Posterior vena cava (tissue), 2 donors: ENCODE measurements at regions of chr9 and their contacts with region 1.

Region 1: GRCh38 chr9:106059886-106060285 is 365.5 kb downstream of the TMEM38B start:
- DNase-seq: no peak

Region 2: GRCh38 chr9:106111045-106111717 is 51.3 kb after region 1 on chr9:
- intact Hi-C with region 1: loop called in 1 of 2 experiments (anchors 2 kb)
- DNase-seq: no peak

Region 3: GRCh38 chr9:106207298-106207697 is 147.4 kb after region 1 on chr9:
- intact Hi-C with region 1: no loop called
- DNase-seq: no peak